ENCODE measurements at regions of chr11 and their contacts with region 1.

Region 1: DNA sequence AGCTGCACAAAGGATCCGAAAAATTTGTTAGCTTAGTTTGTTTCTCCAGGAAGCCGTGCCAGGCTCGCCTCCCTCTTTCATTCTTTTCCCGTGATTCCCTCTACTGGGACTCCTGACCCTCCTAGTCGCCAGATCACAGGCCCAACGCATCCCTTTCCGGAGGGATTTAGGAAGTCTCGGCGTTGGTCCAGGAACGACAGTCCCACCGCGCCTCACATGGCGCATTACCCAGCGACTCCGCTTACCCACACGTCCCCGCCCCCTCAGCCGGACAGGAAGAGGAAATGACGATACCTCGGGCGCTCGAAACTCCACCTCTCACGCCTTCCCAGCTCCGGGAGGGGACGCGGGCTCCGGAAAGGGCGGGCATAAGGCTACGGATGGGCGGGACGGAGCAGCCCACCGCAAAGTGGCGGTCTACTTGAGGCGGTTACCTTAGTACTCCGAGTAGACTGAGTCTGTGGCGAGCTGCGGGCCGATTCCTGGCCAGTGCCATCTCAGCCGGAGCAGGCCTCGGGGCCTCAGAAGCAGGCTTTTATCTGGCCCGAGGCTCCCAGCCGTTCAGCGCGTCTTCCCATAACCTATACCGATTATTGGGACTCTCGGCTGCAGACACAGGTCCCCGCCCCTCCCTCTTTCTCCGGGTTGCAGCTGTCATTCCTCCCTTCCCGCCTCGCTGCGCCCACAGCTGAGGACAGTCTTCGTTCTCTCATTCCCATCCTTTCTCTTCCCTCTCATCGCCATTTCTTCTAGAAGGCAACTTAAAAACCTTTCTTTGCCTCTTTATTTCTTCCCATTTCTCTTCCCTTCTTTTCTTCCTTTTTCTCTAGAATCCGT is at the start of gene CCDC15:
- DNase-seq: peak; percentile 97
- ATAC-seq: peak; percentile 98
- H3K4me3 Mint-ChIP-seq: no peak within 1 kb of the TSS
- H3K27ac Mint-ChIP-seq: no peak within 1 kb of the TSS
- H3K4me1 Mint-ChIP-seq: peaks cover 4% of the 10 kb centered on the region
- H3K27me3 Mint-ChIP-seq: no peaks in the 10 kb centered on the region
- total RNA-seq, gene CCDC15: 5.6 to 6.7 TPM

Region 2: DNA sequence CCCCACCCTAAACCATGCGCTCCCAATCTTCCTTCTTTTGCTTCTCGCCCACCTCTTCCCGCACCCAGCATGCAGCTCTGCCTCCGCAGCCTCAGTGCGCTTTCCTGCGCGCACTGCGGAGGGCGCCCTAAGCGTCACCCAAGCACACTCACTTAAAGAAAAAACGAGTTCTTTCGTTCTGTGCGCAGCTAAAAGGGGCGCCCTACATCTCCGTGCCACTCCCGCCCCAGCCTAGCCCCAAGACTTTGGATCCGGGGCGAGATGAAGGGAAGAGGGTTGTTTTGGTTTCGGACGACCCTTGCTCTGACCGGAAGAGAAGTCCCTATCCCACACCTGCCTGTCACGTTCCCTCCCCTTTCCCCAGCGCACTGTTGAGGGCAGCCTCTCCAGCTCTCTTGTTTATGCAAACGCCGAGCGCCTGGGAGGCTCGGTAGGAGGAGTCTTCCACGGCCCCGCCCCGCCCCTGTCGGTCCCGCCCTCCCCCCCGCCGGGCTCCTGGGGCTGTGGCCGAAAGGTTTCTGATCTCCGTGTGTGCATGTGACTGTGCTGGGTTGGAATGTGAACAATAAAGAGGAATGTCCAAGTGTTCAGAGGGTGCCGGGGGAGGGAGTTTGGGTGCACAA is 207.2 kb before region 1 on chr11:
- CTCF ChIA-PET with region 1: no interaction called
- POLR2A ChIA-PET with region 1: no interaction called
- intact Hi-C with region 1: loop called in 1 of 2 experiments (anchors 5 kb)
- DNase-seq: peak; percentile 88
- ATAC-seq: peak; percentile 92
- H3K4me3 Mint-ChIP-seq: peak overlapping the region; percentile 81
- H3K27ac Mint-ChIP-seq: peak overlapping the region; percentile 90
- H3K4me1 Mint-ChIP-seq: peaks cover 11% of the 10 kb centered on the region
- H3K27me3 Mint-ChIP-seq: peaks cover 2% of the 10 kb centered on the region

Region 3: GRCh38 chr11:124920870-124921609 is 32.9 kb before region 1 on chr11:
- CTCF ChIA-PET with region 1: interaction called, 4 read pairs
- POLR2A ChIA-PET with region 1: no interaction called
- intact Hi-C with region 1: loop called in 1 of 2 experiments (anchors 1 kb)
- DNase-seq: peak; percentile 88
- ATAC-seq: peak; percentile 87
- H3K4me3 Mint-ChIP-seq: no peak overlapping the region
- H3K27ac Mint-ChIP-seq: no peak overlapping the region
- H3K4me1 Mint-ChIP-seq: peaks cover 20% of the 10 kb centered on the region
- H3K27me3 Mint-ChIP-seq: no peaks in the 10 kb centered on the region

Measured in activated CD4-positive, alpha-beta T cell treated with anti-CD3 and anti-CD28 coated beads for 36 hours (primary cell).